HepG2 (cell line): ENCODE measurements at regions of chrX and their contacts with region 1.

Region 1: DNA sequence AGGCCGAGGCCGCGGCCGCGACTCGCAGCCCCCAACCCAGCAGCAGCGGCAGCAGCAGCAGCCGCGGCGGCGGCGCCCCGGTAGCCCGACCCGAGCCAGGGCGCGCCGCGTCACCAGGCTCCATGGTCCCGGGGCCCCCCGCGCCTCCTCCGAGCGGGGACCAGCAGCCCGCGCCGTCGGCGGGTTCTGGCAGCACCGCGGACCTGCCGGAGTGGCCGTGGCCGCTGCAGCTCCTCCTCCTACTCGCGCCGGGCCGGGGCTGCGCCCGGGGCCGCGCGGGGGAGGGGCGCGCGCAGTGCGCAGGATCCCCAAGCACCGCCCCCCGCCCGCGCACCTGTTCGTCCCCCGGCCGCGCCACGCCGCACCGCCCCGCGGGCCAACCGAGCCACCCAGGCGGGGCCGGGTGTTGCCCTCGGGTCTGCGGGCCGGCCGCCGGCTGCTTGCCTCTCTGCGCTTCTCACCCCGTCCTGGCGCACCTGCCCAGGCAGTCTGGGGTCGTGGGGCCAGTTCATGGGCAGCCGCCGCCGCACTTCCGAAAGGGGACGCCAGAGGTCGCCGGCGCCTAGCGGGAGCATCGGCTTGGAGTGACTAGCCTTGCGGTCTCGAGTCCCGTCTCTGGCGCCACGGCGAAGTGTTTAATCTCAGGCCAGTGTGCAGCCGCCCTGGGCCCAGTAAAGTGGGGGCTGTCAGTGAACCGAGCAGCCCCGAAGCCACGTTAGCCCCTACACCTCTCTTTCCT is at the start of gene SLC9A7:
- DNase-seq: peak; percentile 52
- ATAC-seq: peak; percentile 91
- H3K4me3 ChIP-seq: peak within 1 kb of the TSS; percentile 59 to 80 (median 69)
- H3K27ac ChIP-seq: no peak within 1 kb of the TSS
- H3K4me1 ChIP-seq: peaks cover 23% of the 10 kb centered on the region
- H3K27me3 ChIP-seq: no peaks in the 10 kb centered on the region
- CTCF ChIP-seq: peak; percentile 93
- EP300 ChIP-seq: no peak
- POLR2A ChIP-seq: 0 out of 4 replicates have a peak, but pooled peaks of 1 of the 2 experiments have one; percentile 32
- RAD21 ChIP-seq: peak; percentile 93
- total RNA-seq, gene SLC9A7: 5.4 and 7.2 TPM in 2 replicates

Region 2: DNA sequence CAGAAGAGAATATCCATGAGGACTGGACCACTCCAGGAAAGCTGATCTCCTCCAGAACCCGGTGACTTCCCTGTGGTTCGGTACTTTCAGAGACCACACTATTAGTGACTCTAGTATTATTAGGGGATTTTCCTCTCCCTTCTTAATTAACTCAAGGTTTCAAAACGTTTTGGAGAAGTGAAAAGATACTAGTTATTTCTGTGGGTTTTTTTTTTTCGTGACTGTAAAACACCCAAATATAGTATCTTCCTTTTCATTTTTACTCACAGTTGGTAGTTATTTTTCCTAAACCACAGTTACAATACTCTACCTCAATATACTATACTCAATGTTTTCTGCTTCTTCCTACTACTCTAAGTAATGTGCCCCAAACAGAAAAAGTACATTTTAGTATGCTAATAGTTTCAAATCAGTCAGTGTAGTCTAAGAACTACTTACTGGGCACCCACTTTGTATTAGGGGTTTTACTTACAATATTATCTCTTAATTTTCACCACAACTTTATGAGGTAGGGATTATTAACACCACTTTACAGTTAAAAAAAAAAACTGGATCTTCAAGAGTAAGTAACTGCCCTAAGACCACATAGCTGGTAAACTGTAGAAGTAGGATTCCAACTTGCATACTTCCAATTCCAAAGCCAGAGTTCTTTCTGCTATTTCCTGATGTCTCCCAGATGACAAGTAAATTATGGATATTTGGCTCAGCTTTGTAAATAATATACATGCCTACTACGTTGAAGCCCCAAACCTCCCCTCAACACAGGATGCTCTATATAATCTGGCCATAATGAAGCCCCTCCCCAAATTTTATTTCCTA is 45.2 kb before region 1 on chrX:
- CTCF ChIA-PET with region 1: no interaction called
- POLR2A ChIA-PET with region 1: no interaction called
- in situ Hi-C with region 1: no loop called
- intact Hi-C with region 1: no loop called
- DNase-seq: no peak
- ATAC-seq: no peak
- H3K4me3 ChIP-seq: no peak overlapping the region
- H3K27ac ChIP-seq: no peak overlapping the region
- H3K4me1 ChIP-seq: no peaks in the 10 kb centered on the region
- H3K27me3 ChIP-seq: no peaks in the 10 kb centered on the region
- CTCF ChIP-seq: no peak
- EP300 ChIP-seq: no peak
- POLR2A ChIP-seq: no peak
- RAD21 ChIP-seq: no peak

Region 3: DNA sequence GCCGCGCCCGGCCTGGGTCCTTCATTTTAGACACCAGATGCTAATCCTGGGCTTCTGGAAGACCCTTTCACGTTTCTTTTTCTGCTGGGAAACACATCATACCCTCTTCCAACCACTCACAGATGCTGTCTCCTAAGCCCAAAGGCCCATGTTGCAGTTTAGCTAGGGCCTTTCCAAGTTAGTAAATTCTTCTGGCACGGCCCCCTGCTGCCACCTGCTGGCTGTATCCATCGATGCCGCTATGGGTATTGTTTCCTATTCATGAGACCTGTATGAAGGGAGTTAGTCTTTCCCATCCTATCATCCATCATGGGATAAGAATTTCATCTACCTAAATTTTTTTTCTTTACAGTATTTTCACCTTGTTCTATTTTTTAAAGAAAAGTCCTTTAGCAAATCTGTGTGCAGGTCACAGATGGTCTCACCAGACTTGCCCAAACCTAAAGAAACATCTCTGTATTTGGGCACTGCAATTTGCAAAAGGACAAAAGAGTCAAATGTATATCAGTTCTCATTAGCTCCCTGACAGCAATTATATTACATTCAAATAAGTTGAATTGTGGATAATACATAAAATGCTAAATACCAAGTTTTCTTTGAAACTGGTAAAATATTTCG is 37.6 kb after region 1 on chrX:
- CTCF ChIA-PET with region 1: interaction called, 25 read pairs
- POLR2A ChIA-PET with region 1: no interaction called
- in situ Hi-C with region 1: no loop called
- intact Hi-C with region 1: loop called (anchors 1 kb)
- DNase-seq: peak; percentile 54
- ATAC-seq: peak; percentile 85
- H3K4me3 ChIP-seq: no peak overlapping the region
- H3K27ac ChIP-seq: no peak overlapping the region
- H3K4me1 ChIP-seq: peaks cover 22% of the 10 kb centered on the region
- H3K27me3 ChIP-seq: no peaks in the 10 kb centered on the region
- CTCF ChIP-seq: peak; percentile 78
- EP300 ChIP-seq: no peak
- POLR2A ChIP-seq: no peak
- RAD21 ChIP-seq: peak; percentile 56